ENCODE measurements at regions of chrX and their contacts with region 1.

Region 1: DNA sequence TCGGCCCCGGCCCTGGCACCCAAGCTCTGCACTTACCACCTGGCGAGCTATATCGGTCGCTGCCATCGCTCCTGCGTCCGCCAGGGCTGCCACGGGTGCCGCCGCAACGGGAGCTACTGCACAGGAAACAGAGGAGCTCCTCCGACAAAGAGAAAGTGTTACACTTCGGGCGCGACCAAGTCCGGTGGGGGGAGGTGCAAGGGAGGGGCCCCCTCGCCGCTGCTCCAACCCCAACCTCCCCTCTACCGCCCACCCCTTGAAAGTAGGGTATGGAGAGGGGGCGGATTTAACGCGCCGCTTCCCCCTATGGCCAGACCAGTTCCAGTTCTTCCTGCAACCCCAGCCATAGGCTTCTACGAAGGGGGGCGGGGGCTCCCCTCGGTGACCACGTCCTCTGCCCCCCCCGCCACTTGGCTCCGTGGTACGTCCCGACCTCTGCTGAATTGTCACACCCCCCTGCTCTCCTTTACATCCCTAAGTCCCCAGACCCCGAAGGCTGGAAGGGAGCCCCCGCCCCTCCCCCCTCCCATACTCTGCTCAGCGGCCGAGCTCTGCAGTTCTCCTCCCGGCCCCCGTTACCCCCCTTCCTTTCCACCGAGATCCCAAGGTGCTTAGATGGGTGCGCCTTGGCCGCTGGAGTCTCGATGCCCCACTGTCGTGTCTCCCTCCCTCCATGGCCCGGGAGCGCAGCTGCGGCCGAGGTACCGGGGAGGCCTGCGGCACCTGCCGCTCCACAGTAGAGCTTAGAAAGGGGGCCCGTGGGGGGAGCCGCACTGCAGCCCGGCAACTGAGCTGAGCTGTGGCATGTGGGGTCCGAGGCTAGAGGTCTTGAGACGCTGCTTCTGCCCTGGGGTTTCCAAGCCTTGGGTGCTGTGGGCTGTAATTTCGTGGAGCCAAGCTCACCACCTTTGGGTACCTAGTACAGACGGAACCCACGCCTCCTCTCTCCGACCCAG is at the start of gene SEPTIN6:
- DNase-seq: peak; percentile 86
- ATAC-seq: peak; percentile 79
- H3K4me3 Mint-ChIP-seq: peak within 1 kb of the TSS; percentile 91
- H3K27ac Mint-ChIP-seq: peak within 1 kb of the TSS; percentile 64; the same call in 1 of the 2 replicates
- H3K4me1 Mint-ChIP-seq: peaks cover 41% of the 10 kb centered on the region
- H3K27me3 Mint-ChIP-seq: peaks cover 7% of the 10 kb centered on the region
- CTCF ChIP-seq: no peak
- total RNA-seq, gene SEPTIN6: 52.1 to 62.9 TPM (median 53.6 TPM) in 3 replicates

Region 2: DNA sequence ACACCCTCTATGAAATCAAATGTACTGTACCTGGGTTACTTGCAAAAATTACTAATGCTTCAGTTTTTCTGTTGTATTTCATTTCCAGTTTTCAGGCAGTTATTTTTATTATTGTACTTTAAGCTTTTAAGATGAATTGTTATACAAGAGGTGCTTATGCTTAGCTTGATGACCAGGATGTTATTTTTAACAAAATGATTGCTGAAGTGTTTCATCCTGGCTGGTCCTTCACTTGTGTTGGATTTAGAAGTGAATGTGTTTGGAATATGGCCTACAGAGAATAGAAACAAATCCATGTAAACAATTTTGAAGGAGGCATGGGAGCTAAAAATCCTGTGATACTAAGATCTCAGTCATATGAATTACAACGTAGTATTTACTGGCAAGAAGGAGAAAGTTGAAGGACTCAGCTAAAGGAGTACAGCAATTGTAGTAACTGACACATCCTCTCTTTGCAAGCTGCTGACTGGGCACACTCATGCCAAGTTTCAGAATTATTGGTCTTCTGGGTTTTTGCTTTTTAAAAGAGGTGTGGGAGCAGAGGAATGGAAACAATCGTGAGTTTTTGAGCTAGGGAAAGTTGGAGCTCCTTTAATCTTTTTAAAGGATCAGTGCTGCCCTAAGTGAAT is 109.8 kb before region 1 on chrX:
- CTCF ChIA-PET with region 1: no interaction called
- POLR2A ChIA-PET with region 1: no interaction called
- DNase-seq: no peak
- ATAC-seq: no peak
- H3K4me3 Mint-ChIP-seq: no peak overlapping the region
- H3K27ac Mint-ChIP-seq: no peak overlapping the region
- H3K4me1 Mint-ChIP-seq: no peaks in the 10 kb centered on the region
- H3K27me3 Mint-ChIP-seq: no peaks in the 10 kb centered on the region
- CTCF ChIP-seq: no peak

Region 3: DNA sequence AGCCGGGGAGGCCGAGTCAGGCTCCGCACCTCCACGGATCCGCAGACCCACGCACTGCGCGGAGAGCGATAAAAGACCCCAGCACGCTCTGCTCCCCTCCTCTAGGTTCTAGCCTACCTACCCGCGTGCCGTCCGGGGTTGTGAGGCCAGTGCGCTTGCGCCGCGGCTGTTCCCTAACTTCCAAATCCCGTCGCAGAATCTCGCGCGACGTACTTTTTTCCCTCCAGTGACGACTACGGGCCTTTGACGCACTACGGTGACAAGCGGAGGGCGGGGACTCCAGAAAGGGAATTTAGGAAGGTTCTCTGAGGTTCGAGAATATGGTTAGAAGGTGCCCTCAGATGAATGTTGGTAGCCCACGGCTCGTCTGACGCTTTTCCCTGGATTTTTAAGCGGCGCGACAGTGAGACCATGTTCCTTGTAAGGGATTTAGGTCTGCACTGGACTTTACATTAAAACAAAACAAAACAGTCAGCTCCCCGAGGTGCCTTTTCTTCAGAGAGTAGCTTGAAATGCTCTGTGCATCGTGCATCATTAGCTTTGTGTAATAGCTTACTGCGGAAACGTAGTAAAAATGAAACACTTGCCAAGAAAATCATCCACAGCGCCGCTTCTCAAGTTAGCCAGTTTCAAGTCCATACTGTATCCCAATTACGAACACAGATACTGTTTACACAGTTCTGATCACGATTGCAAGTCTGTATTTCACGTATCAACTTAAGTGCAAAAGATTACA is 86.9 kb before region 1 on chrX and contains the start of gene NKRF:
- CTCF ChIA-PET with region 1: interaction called, 12 read pairs
- POLR2A ChIA-PET with region 1: no interaction called
- DNase-seq: peak; percentile 85
- ATAC-seq: peak; percentile 77
- H3K4me3 Mint-ChIP-seq: peak within 1 kb of the TSS; percentile 81
- H3K27ac Mint-ChIP-seq: peak within 1 kb of the TSS; percentile 86
- H3K4me1 Mint-ChIP-seq: peaks cover 20% of the 10 kb centered on the region
- H3K27me3 Mint-ChIP-seq: peaks cover 35% of the 10 kb centered on the region
- CTCF ChIP-seq: no peak
- total RNA-seq, gene NKRF: 13.0 to 15.0 TPM (median 13.6 TPM) in 3 replicates

Region 4: DNA sequence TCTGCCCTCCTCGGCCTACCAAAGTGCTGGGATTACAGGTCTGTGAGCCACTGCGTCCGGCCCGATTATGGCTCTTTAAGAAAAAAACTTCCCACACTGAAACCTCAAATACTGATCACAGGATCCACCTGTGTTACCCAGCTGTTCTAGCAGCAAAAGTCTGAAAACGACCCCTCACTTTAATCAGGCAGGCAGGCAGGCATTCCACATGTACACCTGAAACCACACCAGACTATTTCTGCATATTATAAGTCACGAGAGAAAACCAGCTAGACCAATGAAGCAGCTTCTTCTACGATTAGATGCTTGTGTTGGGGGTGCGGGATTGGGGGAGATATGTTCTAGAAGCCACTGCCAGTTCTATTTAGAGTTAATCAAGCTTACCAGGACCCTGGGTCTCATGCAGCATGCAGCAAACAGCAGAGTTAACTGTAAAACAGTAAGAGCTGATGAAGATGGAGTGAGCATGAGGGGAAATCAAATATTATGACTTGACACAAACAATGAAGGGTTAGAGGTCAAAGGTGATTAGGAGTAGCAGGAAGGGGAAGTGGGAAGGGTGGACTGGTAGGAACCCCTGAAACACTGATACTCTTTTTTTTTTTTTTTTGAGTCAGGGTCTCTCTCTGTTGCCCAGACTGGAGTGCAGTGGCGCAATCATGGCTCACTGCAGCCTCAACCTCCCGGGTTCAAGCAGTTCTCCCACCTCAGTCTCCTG is 68.2 kb before region 1 on chrX:
- CTCF ChIA-PET with region 1: no interaction called
- POLR2A ChIA-PET with region 1: no interaction called
- DNase-seq: no peak
- ATAC-seq: no peak
- H3K4me3 Mint-ChIP-seq: no peak overlapping the region
- H3K27ac Mint-ChIP-seq: no peak overlapping the region; the same call in 1 of the 2 replicates
- H3K4me1 Mint-ChIP-seq: no peaks in the 10 kb centered on the region
- H3K27me3 Mint-ChIP-seq: no peaks in the 10 kb centered on the region; the same call in 1 of the 2 replicates
- CTCF ChIP-seq: no peak

Region 5: GRCh38 chrX:119791438-119792231 is 98.3 kb after region 1 on chrX and contains the start of gene RPL39:
- CTCF ChIA-PET with region 1: no interaction called
- POLR2A ChIA-PET with region 1: interaction called, 11 read pairs
- DNase-seq: peak; percentile 78
- ATAC-seq: peak; percentile 89
- H3K4me3 Mint-ChIP-seq: peak within 1 kb of the TSS; percentile 95
- H3K27ac Mint-ChIP-seq: peak within 1 kb of the TSS; percentile 95
- H3K4me1 Mint-ChIP-seq: peaks cover 22% of the 10 kb centered on the region
- H3K27me3 Mint-ChIP-seq: no peaks in the 10 kb centered on the region
- CTCF ChIP-seq: no peak
- total RNA-seq, gene RPL39: 1,551 to 1,842 TPM (median 1,763 TPM) in 3 replicates

Measured in WTC11 (cell line).